Panc1 (cell line): ENCODE measurements at regions of chr20 and their contacts with region 1.

Region 1: GRCh38 chr20:13158369-13158768 is 62.7 kb upstream of the ISM1 start:
- DNase-seq: no peak
- ATAC-seq: no peak
- H3K4me3 ChIP-seq: no peak overlapping the region
- H3K27ac ChIP-seq: no peak overlapping the region
- H3K4me1 ChIP-seq: no peaks in the 10 kb centered on the region
- H3K27me3 ChIP-seq: no peaks in the 10 kb centered on the region
- CTCF ChIP-seq: no peak

Region 2: GRCh38 chr20:13212750-13213149 is 54.4 kb after region 1 on chr20:
- CTCF ChIA-PET with region 1: no interaction called
- POLR2A ChIA-PET with region 1: no interaction called
- in situ Hi-C with region 1: no loop called
- intact Hi-C with region 1: loop called (anchors 10 kb)
- DNase-seq: no peak
- ATAC-seq: no peak
- H3K4me3 ChIP-seq: no peak overlapping the region
- H3K27ac ChIP-seq: no peak overlapping the region
- H3K4me1 ChIP-seq: no peaks in the 10 kb centered on the region
- H3K27me3 ChIP-seq: peaks cover 10% of the 10 kb centered on the region
- CTCF ChIP-seq: no peak